HEK293 (cell line): ENCODE measurements at regions of chr17 and their contacts with region 1.

Region 1: DNA sequence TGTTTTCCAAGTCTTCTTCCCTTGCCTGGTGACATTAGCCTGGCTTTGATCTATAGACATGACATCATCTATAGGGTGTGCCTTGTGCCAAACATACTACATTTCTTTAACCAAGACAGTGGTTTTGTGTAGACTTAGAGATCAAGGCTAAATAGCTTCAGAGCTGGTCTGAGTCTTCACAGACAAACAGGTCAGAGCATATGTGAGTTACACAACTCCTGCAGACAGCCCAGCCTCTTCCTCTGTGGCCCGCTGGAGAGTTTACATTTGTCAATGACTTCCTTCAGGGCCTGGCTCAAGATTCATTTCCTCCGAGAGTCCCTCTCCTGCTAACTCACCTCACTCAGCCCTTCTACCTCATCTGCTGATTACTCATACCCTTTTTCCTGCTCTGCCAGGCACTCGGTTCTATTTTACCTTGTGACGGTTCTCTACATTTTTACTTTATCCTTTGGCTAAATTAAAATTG is 73.1 kb upstream of the TANC2 start:
- H3K4me3 ChIP-seq: no peak overlapping the region
- H3K27ac ChIP-seq: no peak overlapping the region
- H3K4me1 ChIP-seq: peaks cover 13% of the 10 kb centered on the region
- CTCF ChIP-seq: no peak

Region 2: DNA sequence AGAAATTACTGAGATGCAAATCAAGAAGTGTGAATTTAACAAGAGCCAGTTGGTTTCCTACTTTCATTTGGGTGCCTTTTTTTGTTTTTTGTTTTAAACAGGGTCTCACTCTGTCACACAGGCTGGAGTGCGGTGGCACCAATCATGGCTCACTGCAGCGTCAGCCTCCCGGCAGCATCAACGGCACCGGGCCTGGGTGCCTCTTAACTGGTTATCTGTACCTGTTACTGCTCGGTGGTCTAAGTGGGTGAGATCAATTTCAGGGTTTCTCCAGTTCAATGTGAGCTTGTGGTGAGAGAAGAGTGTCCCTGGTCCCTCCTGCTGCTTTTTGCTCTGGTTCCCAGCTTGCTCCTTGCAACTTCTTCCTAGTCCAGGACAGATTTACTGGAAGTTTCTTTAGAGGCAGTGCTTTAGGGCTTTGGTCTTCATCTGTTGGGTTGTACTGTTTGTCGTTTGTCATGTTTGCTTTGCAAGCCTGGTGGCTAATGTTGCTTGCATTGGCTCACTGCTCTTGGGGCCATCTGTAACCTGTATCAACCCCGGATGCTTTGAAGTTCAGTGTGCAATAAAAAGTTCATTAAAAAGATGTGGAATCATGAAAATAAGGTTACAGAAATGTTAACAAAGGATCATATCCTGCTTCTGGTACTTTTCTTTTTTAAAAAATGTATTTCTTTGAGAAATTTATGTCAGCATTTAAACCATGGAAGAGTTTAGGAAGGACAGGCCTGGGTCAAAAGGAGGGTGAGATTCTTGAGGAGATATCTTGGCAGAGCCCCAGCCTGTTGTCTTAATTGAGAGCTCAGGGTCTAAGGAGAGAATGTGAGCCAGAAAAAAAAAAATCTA is 183.0 kb before region 1 on chr17:
- CTCF ChIA-PET with region 1: no interaction called
- POLR2A ChIA-PET with region 1: interaction called, 10 read pairs
- H3K4me3 ChIP-seq: no peak overlapping the region
- H3K27ac ChIP-seq: no peak overlapping the region
- H3K4me1 ChIP-seq: no peaks in the 10 kb centered on the region
- CTCF ChIP-seq: no peak